ENCODE measurements at regions of chr21 and their contacts with region 1.

Region 1: DNA sequence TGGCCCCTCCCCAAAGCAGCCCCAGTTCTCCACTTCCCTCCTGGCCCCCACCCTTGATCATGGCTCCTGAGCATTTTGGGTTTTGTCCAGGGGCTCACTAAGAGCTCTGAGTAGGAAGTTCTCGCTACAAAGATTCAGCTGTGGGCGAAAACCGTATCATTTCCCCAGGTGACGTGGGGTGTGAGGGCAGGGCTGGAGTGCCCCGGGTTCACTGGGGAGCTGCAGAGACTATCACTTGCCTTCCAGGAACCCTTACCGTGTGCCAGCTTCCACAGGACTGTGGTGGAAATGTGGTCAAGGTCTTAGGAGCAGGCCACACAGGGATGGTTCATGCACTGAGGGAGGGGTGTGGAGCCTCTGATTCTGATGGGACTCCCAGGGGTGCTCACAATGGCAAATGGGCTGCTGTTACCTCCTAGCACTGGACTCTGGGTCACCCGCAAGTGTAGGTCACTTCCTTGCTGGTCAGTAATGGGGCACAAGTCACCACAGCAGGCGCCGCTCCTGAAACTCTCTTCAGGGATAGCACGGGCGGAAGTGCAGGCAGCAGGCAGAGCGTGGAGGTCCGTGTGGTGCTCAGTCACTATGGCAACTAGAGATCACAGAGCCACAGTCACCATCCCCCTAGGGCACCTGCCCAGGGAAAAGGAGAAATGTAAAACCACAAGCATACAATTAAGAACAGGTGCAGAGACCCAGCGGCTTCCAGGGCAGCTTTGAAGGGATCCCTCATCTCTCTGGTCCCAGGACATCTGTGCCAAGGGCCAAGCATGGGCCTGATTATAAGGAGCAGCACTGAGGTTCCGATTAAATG is 35.4 kb downstream of the RSPH1 start:
- DNase-seq: peak; percentile 95
- H3K4me3 ChIP-seq: peak overlapping the region; percentile 60
- H3K27ac ChIP-seq: peak overlapping the region; percentile 83
- H3K4me1 ChIP-seq: peaks cover 70% of the 10 kb centered on the region
- CTCF ChIP-seq: no peak

Region 2: GRCh38 chr21:42360317-42360716 is 100.3 kb before region 1 on chr21:
- CTCF ChIA-PET with region 1: no interaction called
- POLR2A ChIA-PET with region 1: no interaction called
- intact Hi-C with region 1: loop called (anchors 10 kb)
- DNase-seq: peak; percentile 26
- H3K4me3 ChIP-seq: no peak overlapping the region
- H3K27ac ChIP-seq: no peak overlapping the region
- H3K4me1 ChIP-seq: peaks cover 15% of the 10 kb centered on the region
- CTCF ChIP-seq: peak; percentile 58

Region 3: DNA sequence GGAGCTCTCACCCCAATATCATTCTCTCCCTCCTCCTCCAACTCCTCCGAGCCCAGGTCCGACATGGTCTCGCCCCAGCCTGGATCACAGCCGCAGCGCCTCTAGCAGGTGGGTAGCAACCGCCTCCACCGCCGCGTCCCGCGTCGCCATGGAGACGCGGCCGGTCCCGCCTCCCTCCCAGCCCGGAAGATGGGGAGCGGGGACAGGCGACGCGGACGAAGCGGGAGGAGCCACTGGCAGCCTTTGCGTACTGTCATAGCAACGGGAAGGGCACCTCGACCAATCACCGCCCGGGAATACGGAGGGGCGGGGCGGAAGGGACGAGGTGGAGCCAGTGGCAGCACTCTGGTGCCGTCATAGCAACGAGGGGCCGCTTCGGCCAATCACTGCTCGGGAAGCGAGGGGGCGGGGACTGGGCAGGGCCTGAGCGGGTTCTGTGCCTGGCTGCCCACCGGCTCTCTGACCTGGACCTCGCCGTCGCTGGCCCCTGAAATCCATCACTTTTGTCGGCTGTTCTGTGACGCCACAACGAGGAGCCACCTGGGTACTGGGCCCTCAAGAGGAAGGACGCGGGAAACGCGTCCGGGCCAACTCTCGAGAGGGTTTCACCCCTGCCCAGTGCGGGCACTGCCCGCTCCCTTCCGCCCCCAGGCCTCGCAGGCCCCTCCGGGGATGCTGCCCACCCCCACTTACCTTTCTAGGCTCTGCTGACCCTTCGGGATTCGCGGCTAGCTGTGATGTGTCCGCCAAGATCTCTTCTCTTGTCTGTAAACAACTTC is 35.7 kb after region 1 on chr21 and contains the start of gene RSPH1:
- CTCF ChIA-PET with region 1: no interaction called
- POLR2A ChIA-PET with region 1: interaction called, 3 read pairs
- intact Hi-C with region 1: loop called (anchors 2 kb)
- DNase-seq: peak; percentile 99
- H3K4me3 ChIP-seq: peak within 1 kb of the TSS; percentile 75
- H3K27ac ChIP-seq: no peak within 1 kb of the TSS
- H3K4me1 ChIP-seq: peaks cover 17% of the 10 kb centered on the region
- CTCF ChIP-seq: peak; percentile 21; the same call in 1 of the 2 replicates
- total RNA-seq, gene RSPH1: 1.9 and 3.9 TPM in 2 replicates

Region 4: GRCh38 chr21:42505090-42505726 is 44.6 kb after region 1 on chr21:
- CTCF ChIA-PET with region 1: no interaction called
- POLR2A ChIA-PET with region 1: interaction called, 3 read pairs
- intact Hi-C with region 1: loop called (anchors 2 kb)
- DNase-seq: peak; percentile 65
- H3K4me3 ChIP-seq: no peak overlapping the region
- H3K27ac ChIP-seq: no peak overlapping the region
- H3K4me1 ChIP-seq: peaks cover 13% of the 10 kb centered on the region
- CTCF ChIP-seq: no peak

Measured in OCI-LY7 (cell line).